Naive thymus-derived CD4-positive, alpha-beta T cell (primary cell): ENCODE measurements at regions of chrX and their contacts with region 1.

Region 1: DNA sequence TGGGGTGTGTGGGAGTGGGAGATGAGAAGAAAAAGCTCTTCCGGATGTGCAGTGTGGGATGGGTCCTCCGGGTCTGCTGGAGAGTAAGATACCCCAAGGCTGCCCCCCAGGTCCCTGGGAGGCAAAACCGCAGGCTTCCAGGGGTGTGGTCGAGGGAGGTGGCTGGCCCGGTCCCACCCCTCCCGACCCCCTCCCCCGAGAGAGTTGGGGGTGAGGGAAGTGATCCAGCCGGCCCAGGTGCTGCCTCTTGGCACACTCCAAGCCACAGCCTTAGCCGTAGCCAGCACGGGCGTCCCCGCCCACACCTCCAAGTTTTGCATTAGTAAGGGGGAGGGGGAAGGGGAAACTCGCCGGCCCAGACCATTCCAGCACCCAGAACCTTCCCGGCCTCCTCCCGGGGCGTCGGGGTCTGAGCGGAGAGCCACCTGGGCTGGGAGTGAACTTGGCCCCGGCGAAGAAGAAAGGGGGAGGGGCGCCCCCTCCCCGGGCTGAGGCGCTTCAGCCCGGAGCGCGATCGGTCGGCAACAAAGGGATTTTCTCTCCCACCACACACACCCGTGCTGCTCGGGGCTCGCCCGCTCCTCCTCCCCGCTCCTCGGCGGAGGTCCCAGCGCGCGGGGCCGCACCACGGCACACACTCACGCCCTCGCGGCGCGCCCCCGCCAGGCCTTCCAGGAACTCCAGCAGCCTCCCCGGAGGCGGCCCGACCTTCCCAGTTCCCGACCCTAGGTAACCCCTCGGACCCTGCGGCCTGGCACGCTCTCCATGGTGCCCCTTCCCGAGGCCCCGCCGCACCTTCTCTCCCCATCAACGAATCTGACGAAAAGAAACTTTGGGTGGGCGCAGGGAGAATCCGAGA is 14.4 kb downstream of the BCOR start:
- DNase-seq: peak in 1 of 9 donors; percentile 25
- ATAC-seq: peak; percentile 61
- H3K4me3 ChIP-seq: peak overlapping the region; percentile 37
- H3K4me3 Mint-ChIP-seq: peak overlapping the region; percentile 75 to 88 (median 84)
- H3K27ac ChIP-seq: peak overlapping the region; percentile 47
- H3K27ac Mint-ChIP-seq: peak overlapping the region in 3 of 9 donors; percentile 33 to 70 (median 51)
- H3K4me1 ChIP-seq: peaks cover 5 to 32% of the 10 kb centered on the region in 2 donors
- H3K4me1 Mint-ChIP-seq: peaks cover 13 to 81% (median 62%) of the 10 kb centered on the region in 7 donors
- H3K27me3 ChIP-seq: no peaks in the 10 kb centered on the region
- H3K27me3 Mint-ChIP-seq: no peaks in the 10 kb centered on the region

Region 2: DNA sequence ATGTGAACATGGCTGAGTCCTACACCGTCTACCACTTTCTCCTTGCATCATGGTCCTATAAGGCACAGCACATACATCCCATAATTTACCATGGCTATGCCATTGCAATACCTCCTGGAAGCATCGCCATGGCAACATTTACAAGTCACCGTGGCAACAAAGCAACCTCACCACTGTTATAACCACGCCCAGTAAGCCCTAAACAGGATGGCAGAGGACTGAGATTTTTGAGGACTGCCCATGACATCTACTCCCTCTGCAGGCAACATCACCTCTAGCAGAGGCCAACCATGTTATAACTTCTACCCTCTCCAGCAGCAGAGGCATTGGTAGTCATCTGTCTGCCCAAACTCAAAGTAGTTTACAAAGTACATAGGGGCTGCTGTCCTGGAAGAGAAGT is 15.3 kb before region 1 on chrX:
- CTCF ChIA-PET with region 1: no interaction called
- POLR2A ChIA-PET with region 1: no interaction called
- intact Hi-C with region 1: loop called in 1 of 2 experiments (anchors 2 kb)
- DNase-seq: peak in 2 of 9 donors; percentile 35 to 39
- ATAC-seq: peak; percentile 75
- H3K4me3 ChIP-seq: no peak overlapping the region
- H3K4me3 Mint-ChIP-seq: peak overlapping the region in 2 of 10 donors; percentile 11 to 12
- H3K27ac ChIP-seq: no peak overlapping the region
- H3K27ac Mint-ChIP-seq: peak overlapping the region in 8 of 9 donors; percentile 19 to 81 (median 40)
- H3K4me1 ChIP-seq: peaks cover 0 to 33% of the 10 kb centered on the region in 2 donors
- H3K4me1 Mint-ChIP-seq: peaks cover 22 to 71% (median 65%) of the 10 kb centered on the region in 7 donors
- H3K27me3 ChIP-seq: no peaks in the 10 kb centered on the region
- H3K27me3 Mint-ChIP-seq: no peaks in the 10 kb centered on the region